ENCODE measurements at regions of chr4 and their contacts with region 1.

Region 1: DNA sequence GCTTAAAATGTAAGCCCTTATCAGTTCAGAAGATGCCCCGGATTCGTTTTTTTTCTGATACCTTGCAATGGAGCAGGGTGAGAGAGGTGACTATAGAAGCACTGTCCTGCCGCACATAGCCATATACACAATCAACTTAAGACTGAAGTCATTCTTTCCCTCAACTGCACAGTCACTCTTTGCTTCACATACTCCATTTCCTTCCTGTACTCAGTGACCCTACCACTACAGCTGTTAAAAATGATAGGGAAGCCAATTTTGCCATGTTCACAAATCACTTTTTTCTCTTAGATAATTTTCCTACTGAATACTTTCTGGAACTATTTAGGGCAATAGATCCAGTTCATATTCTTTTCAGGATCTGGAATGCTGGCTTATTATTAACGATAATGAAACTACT is 300.0 kb downstream of the ANK2 start:
- DNase-seq: no peak
- H3K4me3 ChIP-seq: no peak overlapping the region
- H3K27ac ChIP-seq: no peak overlapping the region
- H3K4me1 ChIP-seq: no peaks in the 10 kb centered on the region
- H3K27me3 ChIP-seq: no peaks in the 10 kb centered on the region
- CTCF ChIP-seq: no peak

Region 2: GRCh38 chr4:113141901-113142346 is 207.5 kb before region 1 on chr4:
- CTCF ChIA-PET with region 1: no interaction called
- POLR2A ChIA-PET with region 1: no interaction called
- intact Hi-C with region 1: no loop called
- DNase-seq: peak; percentile 4 to 47
- H3K4me3 ChIP-seq: no peak overlapping the region
- H3K27ac ChIP-seq: 0 out of 2 replicates have a peak overlapping the region, but pooled peaks have one; percentile 29
- H3K4me1 ChIP-seq: peaks cover 6% of the 10 kb centered on the region
- H3K27me3 ChIP-seq: no peaks in the 10 kb centered on the region
- CTCF ChIP-seq: no peak

Region 3: GRCh38 chr4:113893546-113893945 is 544.1 kb after region 1 on chr4:
- CTCF ChIA-PET with region 1: interaction called, 16 read pairs
- POLR2A ChIA-PET with region 1: no interaction called
- intact Hi-C with region 1: no loop called
- DNase-seq: no peak
- H3K4me3 ChIP-seq: no peak overlapping the region
- H3K27ac ChIP-seq: no peak overlapping the region
- H3K4me1 ChIP-seq: no peaks in the 10 kb centered on the region
- H3K27me3 ChIP-seq: no peaks in the 10 kb centered on the region
- CTCF ChIP-seq: peak; percentile 54

Measured in PC-9 (cell line).